SK-N-SH (cell line): ENCODE measurements at regions of chr12 and their contacts with region 1.

Region 1: GRCh38 chr12:119412811-119413794 is 78.6 kb downstream of the CCDC60 start:
- DNase-seq: peak; percentile 70
- H3K4me3 ChIP-seq: no peak overlapping the region
- H3K27ac ChIP-seq: no peak overlapping the region
- H3K4me1 ChIP-seq: peaks cover 0 to 3% of the 10 kb centered on the region in 2 experiments; a peak in 1 of 4 replicates
- H3K27me3 ChIP-seq: no peaks in the 10 kb centered on the region
- CTCF ChIP-seq: peak; percentile 84
- EP300 ChIP-seq: no peak
- RAD21 ChIP-seq: peak; percentile 91

Region 2: GRCh38 chr12:118979763-118980406 is 433.2 kb before region 1 on chr12:
- CTCF ChIA-PET with region 1: interaction called, 21 read pairs
- POLR2A ChIA-PET with region 1: interaction called, 3 read pairs
- DNase-seq: peak; percentile 73
- H3K4me3 ChIP-seq: peak overlapping the region; percentile 54 to 55; a peak in 2 of 4 replicates
- H3K27ac ChIP-seq: peak overlapping the region in 1 of 2 experiments; percentile 89; a peak in 2 of 4 replicates
- H3K4me1 ChIP-seq: peaks cover 0 to 8% of the 10 kb centered on the region in 2 experiments; a peak in 1 of 4 replicates
- H3K27me3 ChIP-seq: no peaks in the 10 kb centered on the region
- CTCF ChIP-seq: peak; percentile 64
- EP300 ChIP-seq: no peak
- RAD21 ChIP-seq: peak; percentile 87

Region 3: GRCh38 chr12:119036878-119037825 is 376.0 kb before region 1 on chr12:
- CTCF ChIA-PET with region 1: interaction called, 10 read pairs
- POLR2A ChIA-PET with region 1: no interaction called
- DNase-seq: peak; percentile 60
- H3K4me3 ChIP-seq: no peak overlapping the region; a peak in 1 of 4 replicates
- H3K27ac ChIP-seq: no peak overlapping the region
- H3K4me1 ChIP-seq: peaks cover 0 to 3% of the 10 kb centered on the region in 2 experiments; a peak in 1 of 4 replicates
- H3K27me3 ChIP-seq: no peaks in the 10 kb centered on the region
- CTCF ChIP-seq: peak; percentile 44
- EP300 ChIP-seq: no peak
- RAD21 ChIP-seq: peak; percentile 68

Region 4: GRCh38 chr12:119096416-119097202 is 316.5 kb before region 1 on chr12:
- CTCF ChIA-PET with region 1: interaction called, 14 read pairs
- POLR2A ChIA-PET with region 1: no interaction called
- DNase-seq: no peak
- H3K4me3 ChIP-seq: no peak overlapping the region
- H3K27ac ChIP-seq: no peak overlapping the region
- H3K4me1 ChIP-seq: peaks cover 0 to 3% of the 10 kb centered on the region in 2 experiments; a peak in 1 of 4 replicates
- H3K27me3 ChIP-seq: no peaks in the 10 kb centered on the region
- CTCF ChIP-seq: no peak
- EP300 ChIP-seq: no peak
- RAD21 ChIP-seq: no peak

Region 5: DNA sequence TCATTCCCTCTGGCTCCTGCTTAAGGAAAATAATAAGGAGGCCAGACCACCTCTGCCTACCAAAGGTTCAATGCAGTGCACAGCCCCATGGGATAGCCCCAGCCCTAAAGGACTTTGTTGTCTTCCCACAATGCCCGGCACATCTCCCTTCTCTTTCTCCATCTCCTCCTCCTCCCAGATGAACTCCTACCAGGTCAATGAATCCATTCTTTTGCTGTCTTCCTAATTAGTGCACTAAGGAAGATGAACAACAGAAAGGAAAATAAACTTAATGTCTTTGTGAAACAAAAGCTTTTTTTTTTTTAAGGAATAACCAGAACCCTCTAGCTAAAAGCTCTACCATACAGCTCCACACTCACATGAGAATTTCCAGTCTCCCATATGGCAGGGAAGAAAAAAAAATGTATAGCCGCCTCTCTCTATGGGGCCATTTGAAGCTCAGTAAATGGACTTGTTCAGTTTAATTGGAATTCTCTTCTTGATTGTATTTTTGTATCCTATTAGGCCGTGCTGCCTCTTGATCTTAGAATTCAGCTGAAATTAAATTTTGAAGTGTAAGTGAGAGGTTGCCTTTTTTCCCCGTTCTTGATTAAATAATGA is 276.2 kb before region 1 on chr12:
- CTCF ChIA-PET with region 1: interaction called, 10 read pairs
- POLR2A ChIA-PET with region 1: no interaction called
- DNase-seq: no peak
- H3K4me3 ChIP-seq: no peak overlapping the region
- H3K27ac ChIP-seq: no peak overlapping the region
- H3K4me1 ChIP-seq: peaks cover 0 to 2% of the 10 kb centered on the region in 2 experiments; a peak in 1 of 4 replicates
- H3K27me3 ChIP-seq: no peaks in the 10 kb centered on the region
- CTCF ChIP-seq: no peak
- EP300 ChIP-seq: no peak
- RAD21 ChIP-seq: no peak

Region 6: GRCh38 chr12:119235197-119235750 is 177.8 kb before region 1 on chr12:
- CTCF ChIA-PET with region 1: interaction called, 11 read pairs
- POLR2A ChIA-PET with region 1: no interaction called
- DNase-seq: peak; percentile 23
- H3K4me3 ChIP-seq: no peak overlapping the region
- H3K27ac ChIP-seq: no peak overlapping the region
- H3K4me1 ChIP-seq: peaks cover 0 to 3% of the 10 kb centered on the region in 2 experiments; a peak in 1 of 4 replicates
- H3K27me3 ChIP-seq: no peaks in the 10 kb centered on the region
- CTCF ChIP-seq: no peak
- EP300 ChIP-seq: no peak
- RAD21 ChIP-seq: peak; percentile 21; the same call in 1 of the 2 replicates

Region 7: GRCh38 chr12:119432949-119433348 is 19.8 kb after region 1 on chr12:
- CTCF ChIA-PET with region 1: interaction called, 12 read pairs
- POLR2A ChIA-PET with region 1: no interaction called
- DNase-seq: no peak
- H3K4me3 ChIP-seq: no peak overlapping the region
- H3K27ac ChIP-seq: no peak overlapping the region
- H3K4me1 ChIP-seq: no peaks in the 10 kb centered on the region
- H3K27me3 ChIP-seq: no peaks in the 10 kb centered on the region
- CTCF ChIP-seq: no peak
- EP300 ChIP-seq: no peak
- RAD21 ChIP-seq: no peak